ENCODE measurements at regions of chr16 and their contacts with region 1.

Region 1: DNA sequence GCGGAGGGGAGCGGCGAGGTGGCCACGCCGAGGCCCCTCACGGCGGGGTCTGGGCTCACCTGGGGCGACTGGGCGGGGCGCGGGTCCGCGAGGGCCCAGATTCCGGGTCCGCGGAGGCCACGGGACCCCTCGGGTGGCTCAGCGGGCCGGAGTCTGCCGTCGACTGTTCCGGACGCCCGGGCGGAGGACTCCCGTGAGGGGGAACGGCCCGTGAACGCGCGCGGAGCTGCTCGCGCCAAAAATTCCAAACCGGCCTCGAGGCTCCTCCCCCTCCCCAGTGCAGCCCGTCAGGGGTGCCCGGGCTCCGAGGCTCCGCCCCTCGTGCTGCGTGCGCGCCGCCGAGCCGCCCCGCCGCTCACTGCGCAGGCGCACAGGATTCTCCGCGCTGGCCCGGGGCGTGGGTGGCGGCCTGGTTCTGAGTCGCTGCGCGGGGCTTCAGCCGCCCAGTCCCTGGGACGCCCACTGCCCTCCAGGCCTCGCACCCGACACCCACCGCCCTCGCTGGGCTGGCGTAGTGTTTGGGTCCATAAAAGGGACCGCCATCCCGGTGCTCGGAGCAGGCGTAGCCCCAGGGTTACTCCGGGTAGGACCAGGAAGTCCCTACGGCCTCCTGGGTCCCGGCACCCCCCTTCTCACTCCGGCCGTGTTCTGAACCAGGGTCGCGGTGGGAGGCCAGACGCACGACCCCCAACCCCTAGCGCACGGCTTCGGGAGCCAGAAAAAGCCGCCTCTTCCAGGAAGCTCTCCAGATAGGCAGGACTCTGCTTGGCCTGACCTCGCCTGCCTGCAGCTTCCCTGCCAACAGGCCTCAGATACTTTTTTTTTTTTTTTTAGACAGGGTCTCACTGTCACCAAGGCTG is at the start of gene PKMYT1:
- DNase-seq: peak; percentile 38
- H3K4me3 ChIP-seq: peak within 1 kb of the TSS; percentile 80
- H3K27ac ChIP-seq: peak within 1 kb of the TSS; percentile 61
- H3K27me3 ChIP-seq: no peaks in the 10 kb centered on the region
- CTCF ChIP-seq: no peak
- polyA plus RNA-seq, gene PKMYT1: 1.2 and 1.3 TPM in 2 replicates

Region 2: DNA sequence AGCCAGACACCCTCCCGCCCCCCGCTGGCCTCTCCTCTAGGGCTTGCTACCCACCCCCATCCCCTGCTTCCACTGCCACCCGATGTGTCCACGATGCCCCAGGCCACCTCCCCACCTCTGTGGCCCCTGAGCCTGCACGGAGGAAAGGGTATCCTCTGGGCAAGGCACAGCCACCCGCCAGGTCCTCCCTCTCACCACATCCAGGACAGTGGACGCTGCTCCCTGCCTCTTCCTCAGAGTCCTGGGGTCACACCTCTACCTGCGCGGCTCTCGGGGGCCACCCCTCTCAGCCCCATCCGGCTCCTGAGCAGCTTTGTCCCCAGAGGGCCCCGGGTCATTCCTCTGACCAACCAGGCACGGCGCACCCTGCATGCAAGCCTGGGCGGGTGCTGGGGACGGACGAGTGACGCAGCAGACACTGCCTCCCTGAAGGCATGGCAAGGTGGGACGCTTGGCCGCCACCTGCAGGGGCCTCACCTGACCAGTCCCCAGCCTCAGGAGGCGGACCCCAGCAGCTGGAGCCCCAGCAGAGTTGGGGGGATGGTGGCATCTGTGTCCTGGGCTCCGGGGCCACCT is 43.9 kb before region 1 on chr16:
- CTCF ChIA-PET with region 1: interaction called, 11 read pairs
- POLR2A ChIA-PET with region 1: no interaction called
- DNase-seq: no peak
- H3K4me3 ChIP-seq: no peak overlapping the region
- H3K27ac ChIP-seq: no peak overlapping the region
- H3K27me3 ChIP-seq: no peaks in the 10 kb centered on the region
- CTCF ChIP-seq: no peak

Region 3: GRCh38 chr16:2968738-2969544 is 11.5 kb before region 1 on chr16 and contains the start of gene PAQR4:
- CTCF ChIA-PET with region 1: interaction called, 3 read pairs
- POLR2A ChIA-PET with region 1: interaction called, 10 read pairs
- DNase-seq: peak; percentile 38
- H3K4me3 ChIP-seq: peak within 1 kb of the TSS; percentile 64
- H3K27ac ChIP-seq: no peak within 1 kb of the TSS
- H3K27me3 ChIP-seq: peaks cover 20% of the 10 kb centered on the region
- CTCF ChIP-seq: no peak
- polyA plus RNA-seq, gene PAQR4: 1.2 and 1.9 TPM in 2 replicates

Region 4: DNA sequence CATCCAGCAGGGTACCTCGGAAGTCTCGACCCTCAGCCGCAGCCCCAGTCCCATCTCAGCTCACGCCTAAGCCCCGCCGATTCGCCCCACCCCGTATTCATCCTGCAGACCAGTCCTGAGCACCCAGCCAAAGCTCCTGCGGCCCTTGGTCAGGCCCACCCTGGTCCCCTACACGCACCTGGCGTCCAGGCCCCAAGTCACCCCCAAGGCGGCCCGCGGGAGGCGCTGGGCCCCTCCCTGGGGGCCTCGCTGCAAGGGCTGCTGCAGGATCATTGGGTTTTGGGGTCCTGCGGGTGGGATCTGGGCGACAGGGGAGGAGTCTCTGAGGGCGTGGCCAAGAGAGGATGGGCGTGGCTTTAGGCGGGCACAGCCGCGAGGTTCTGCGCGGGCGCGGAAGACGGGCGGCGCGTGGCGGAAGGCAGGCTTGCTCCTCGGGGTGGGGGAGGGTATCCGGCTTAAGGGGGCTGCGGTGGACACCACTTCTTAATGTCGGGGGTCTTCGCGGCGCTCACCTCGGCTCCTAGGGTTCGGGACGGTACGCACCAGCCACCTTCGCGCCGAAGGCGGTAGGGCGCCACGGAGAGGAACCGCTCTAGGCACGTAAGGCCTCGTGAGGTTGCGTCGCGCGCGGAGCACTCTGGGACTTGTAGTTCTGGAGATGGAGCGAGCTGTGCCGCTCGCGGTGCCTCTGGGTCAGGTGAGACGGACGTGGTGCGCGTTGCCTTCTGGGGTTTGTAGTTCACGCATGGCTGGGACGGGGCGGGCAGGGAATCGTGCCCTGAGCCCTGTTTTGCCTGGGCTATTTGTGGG is 43.4 kb after region 1 on chr16 and contains the starts of genes HCFC1R1 and THOC6:
- CTCF ChIA-PET with region 1: no interaction called
- POLR2A ChIA-PET with region 1: interaction called, 10 read pairs
- DNase-seq: peak; percentile 91
- H3K4me3 ChIP-seq: peak within 1 kb of the TSS; percentile 94
- H3K27ac ChIP-seq: peak within 1 kb of the TSS; percentile 99
- H3K27me3 ChIP-seq: peaks cover 2% of the 10 kb centered on the region
- CTCF ChIP-seq: no peak
- polyA plus RNA-seq, gene HCFC1R1: 51.6 and 73.4 TPM in 2 replicates
- polyA plus RNA-seq, gene THOC6: 14.5 and 16.7 TPM in 2 replicates